CD8-positive, alpha-beta T cell (primary cell): ENCODE measurements at regions of chr3 and their contacts with region 1.

Region 1: DNA sequence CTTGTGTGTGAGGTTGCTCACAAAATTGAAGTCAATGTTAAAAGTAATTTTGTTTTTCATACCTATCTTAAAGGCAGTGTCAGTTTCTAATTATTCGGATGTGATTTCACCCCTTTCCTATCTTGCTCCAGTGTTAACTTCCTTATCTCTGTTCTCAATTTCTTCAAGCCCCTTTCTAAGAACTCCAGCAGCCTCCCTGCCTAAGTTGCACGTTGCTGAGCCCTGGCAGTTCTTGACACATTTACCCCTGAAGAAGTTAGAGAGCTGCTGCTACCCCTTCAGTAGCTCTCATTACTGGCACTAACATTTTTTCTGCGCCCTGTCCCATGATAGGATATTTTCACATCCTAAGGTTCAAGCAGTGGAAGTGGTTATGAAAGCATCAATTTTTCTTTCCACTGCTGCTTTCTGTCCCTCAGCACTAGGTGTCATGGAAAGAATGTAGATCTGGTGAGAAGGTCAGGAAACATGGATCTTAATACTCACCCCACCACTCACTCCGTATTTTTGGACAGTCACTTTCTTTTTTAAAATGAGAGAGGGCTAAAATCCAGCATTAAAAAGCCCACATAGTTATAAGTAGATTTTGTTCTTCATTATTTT is 62.9 kb downstream of the OPA1 start:
- DNase-seq: no peak
- ATAC-seq: no peak
- H3K4me3 ChIP-seq: no peak overlapping the region
- H3K4me3 Mint-ChIP-seq: no peak overlapping the region
- H3K27ac ChIP-seq: no peak overlapping the region
- H3K27ac Mint-ChIP-seq: no peak overlapping the region
- H3K4me1 ChIP-seq: no peaks in the 10 kb centered on the region
- H3K4me1 Mint-ChIP-seq: no peaks in the 10 kb centered on the region
- H3K27me3 ChIP-seq: no peaks in the 10 kb centered on the region
- H3K27me3 Mint-ChIP-seq: no peaks in the 10 kb centered on the region
- CTCF ChIP-seq: no peak

Region 2: GRCh38 chr3:193640165-193640715 is 15.7 kb before region 1 on chr3:
- CTCF ChIA-PET with region 1: no interaction called
- POLR2A ChIA-PET with region 1: interaction called, 3 read pairs
- intact Hi-C with region 1: loop called in 1 of 2 experiments (anchors 2 kb)
- DNase-seq: no peak
- ATAC-seq: no peak
- H3K4me3 ChIP-seq: no peak overlapping the region
- H3K4me3 Mint-ChIP-seq: no peak overlapping the region
- H3K27ac ChIP-seq: no peak overlapping the region
- H3K27ac Mint-ChIP-seq: no peak overlapping the region
- H3K4me1 ChIP-seq: no peaks in the 10 kb centered on the region
- H3K4me1 Mint-ChIP-seq: no peaks in the 10 kb centered on the region
- H3K27me3 ChIP-seq: no peaks in the 10 kb centered on the region
- H3K27me3 Mint-ChIP-seq: no peaks in the 10 kb centered on the region
- CTCF ChIP-seq: no peak